ENCODE measurements at regions of chr22 and their contacts with region 1.

Region 1: DNA sequence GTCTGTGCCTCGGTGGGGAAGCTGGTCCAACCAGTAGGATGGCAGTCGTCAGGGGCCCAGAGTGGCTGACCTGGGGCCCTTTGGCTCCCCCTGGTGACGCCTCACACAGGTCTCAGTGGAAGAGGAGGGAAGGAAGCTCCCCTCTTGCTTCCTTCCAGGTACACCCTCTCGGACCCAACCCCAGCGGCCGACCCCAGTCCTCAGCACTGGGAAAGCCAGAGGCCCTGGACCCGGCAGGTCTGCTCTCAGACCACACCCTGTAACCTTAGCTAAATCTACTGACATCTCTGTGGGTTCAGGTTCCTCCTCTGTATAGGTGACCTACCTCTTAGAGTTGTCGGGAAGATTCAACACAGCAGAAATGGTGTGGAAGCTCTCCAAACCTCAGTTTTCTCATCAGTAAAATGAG is 3.4 kb upstream of the SCUBE1 start:
- DNase-seq: peak; percentile 76
- H3K4me3 Mint-ChIP-seq: no peak overlapping the region
- H3K27ac Mint-ChIP-seq: peak overlapping the region; percentile 73
- H3K4me1 Mint-ChIP-seq: peaks cover 35% of the 10 kb centered on the region
- H3K27me3 Mint-ChIP-seq: peaks cover 44% of the 10 kb centered on the region

Region 2: DNA sequence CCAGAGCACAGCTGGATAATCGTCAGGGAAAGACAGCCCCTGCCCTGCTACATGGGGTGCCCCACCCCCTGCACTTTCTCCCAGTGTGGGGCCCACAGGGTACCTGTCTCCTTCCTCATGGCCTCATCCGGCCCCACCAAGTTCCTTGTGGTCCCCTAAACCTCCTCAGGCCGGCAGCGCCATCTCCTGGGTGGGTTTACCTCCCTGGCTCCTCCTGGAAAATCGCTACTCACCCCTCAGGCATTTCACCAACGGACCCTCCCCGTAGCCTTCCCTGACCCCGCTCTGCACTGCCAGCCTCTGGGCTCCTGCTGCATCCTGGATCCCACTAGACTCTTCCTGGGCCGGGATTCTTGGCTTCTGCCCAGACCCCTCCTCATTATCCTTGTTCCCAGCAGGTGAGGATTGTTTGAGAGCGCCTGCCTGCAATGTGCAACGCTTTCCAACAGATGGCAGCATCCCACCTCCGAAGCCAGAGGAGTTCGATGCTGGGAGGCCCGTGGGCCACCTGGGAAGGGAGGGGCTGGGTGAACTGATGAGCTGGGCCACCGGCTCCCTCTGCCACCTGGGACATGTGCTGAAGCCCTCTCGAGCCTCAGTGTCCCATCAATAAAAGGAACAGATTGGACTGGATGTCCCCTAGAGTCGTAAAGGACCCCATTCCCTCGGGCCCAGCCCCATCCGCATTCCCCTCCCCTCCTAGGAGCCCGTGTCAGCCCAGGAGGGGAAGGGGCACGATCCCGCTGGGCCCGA is 115.4 kb before region 1 on chr22:
- CTCF ChIA-PET with region 1: interaction called, 99 read pairs
- POLR2A ChIA-PET with region 1: interaction called, 3 read pairs
- DNase-seq: peak; percentile 73
- H3K4me3 Mint-ChIP-seq: no peak overlapping the region
- H3K27ac Mint-ChIP-seq: no peak overlapping the region
- H3K4me1 Mint-ChIP-seq: peaks cover 4% of the 10 kb centered on the region
- H3K27me3 Mint-ChIP-seq: peaks cover 3% of the 10 kb centered on the region

Region 3: DNA sequence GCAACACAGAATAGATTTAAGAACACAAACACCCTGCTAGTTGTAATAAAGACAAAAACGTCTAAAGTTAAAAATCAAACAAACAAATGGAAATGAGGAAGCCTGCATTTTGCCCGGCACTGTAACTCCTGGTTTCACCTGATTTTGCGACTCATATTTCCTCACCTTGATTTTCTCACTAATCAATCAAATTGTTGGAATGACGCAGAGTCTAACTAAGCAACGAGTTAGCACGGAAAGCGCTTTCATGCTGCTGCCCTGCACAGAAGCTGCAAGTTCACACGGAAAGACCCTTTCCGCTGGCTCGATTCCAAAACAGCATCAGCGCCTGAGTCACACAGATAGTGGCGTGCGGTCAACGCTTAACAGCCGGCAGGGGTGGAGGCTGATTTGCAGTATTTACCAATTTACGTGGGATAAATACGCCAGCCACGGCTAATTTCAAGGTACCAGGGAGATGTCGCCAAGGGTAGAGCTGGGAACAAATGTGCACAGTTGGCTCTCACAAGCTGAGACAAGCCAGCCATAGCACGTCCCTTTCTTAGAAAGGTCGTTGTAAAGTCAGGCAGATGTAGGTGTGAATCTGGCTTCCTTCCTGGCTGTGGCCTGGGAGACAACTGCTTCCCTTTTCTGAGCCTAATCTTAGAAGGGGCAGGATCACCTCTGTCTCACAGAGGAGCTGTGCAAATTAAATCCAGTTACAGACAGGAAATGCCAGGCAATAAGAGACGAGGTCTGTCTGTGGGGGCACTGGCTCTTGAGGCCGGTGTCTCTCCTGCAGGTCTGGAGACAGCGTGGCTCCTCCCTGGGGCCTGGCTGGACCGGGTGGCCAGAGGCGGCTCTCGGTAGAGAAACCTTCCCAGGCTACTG is 82.6 kb before region 1 on chr22:
- CTCF ChIA-PET with region 1: interaction called, 30 read pairs
- POLR2A ChIA-PET with region 1: interaction called, 6 read pairs
- DNase-seq: peak; percentile 90
- H3K4me3 Mint-ChIP-seq: peak overlapping the region; percentile 63
- H3K27ac Mint-ChIP-seq: peak overlapping the region; percentile 85
- H3K4me1 Mint-ChIP-seq: peaks cover 32% of the 10 kb centered on the region
- H3K27me3 Mint-ChIP-seq: peaks cover 9% of the 10 kb centered on the region

Region 4: DNA sequence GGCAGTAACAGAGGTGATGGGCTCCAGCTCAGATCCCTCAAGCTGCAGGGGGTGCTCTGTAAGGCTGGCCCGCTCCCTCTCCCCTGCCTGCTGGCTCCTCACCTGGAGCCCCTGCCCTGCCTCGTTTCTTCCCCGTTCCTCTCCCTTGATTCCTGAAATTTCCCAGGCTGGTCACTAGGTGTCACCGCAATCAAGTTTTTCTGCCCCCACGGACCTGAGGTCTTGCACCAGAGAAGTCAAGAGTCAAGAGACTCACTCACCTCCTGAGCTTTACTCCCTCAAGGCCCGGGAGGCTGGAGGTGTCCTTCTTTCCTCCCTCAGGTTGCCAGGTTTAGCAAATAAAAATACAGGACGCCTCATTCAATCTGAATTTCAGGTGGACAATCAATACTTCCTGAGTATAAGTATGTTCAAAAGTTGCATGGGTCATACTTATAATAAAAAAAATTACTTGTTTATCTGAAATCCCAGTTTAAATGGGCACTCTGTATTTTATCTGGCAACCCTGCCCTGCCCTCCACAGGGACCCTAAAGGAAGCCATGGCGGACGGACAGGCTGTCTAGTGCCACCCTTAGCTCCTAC is 72.5 kb before region 1 on chr22:
- CTCF ChIA-PET with region 1: interaction called, 98 read pairs
- POLR2A ChIA-PET with region 1: interaction called, 6 read pairs
- DNase-seq: peak; percentile 54
- H3K4me3 Mint-ChIP-seq: no peak overlapping the region
- H3K27ac Mint-ChIP-seq: no peak overlapping the region
- H3K4me1 Mint-ChIP-seq: peaks cover 16% of the 10 kb centered on the region
- H3K27me3 Mint-ChIP-seq: peaks cover 2% of the 10 kb centered on the region

Region 5: GRCh38 chr22:43287441-43287840 is 59.1 kb before region 1 on chr22:
- CTCF ChIA-PET with region 1: interaction called, 12 read pairs
- POLR2A ChIA-PET with region 1: no interaction called
- DNase-seq: no peak
- H3K4me3 Mint-ChIP-seq: no peak overlapping the region
- H3K27ac Mint-ChIP-seq: no peak overlapping the region
- H3K4me1 Mint-ChIP-seq: peaks cover 12% of the 10 kb centered on the region
- H3K27me3 Mint-ChIP-seq: peaks cover 2% of the 10 kb centered on the region

Region 6: GRCh38 chr22:43377896-43378704 is 31.6 kb after region 1 on chr22:
- CTCF ChIA-PET with region 1: interaction called, 26 read pairs
- POLR2A ChIA-PET with region 1: interaction called, 7 read pairs
- DNase-seq: peak; percentile 44
- H3K4me3 Mint-ChIP-seq: no peak overlapping the region
- H3K27ac Mint-ChIP-seq: no peak overlapping the region
- H3K4me1 Mint-ChIP-seq: peaks cover 39% of the 10 kb centered on the region
- H3K27me3 Mint-ChIP-seq: peaks cover 68% of the 10 kb centered on the region

Region 7: GRCh38 chr22:43385770-43386641 is 39.5 kb after region 1 on chr22:
- CTCF ChIA-PET with region 1: interaction called, 13 read pairs
- POLR2A ChIA-PET with region 1: interaction called, 6 read pairs
- DNase-seq: peak; percentile 77
- H3K4me3 Mint-ChIP-seq: no peak overlapping the region
- H3K27ac Mint-ChIP-seq: no peak overlapping the region
- H3K4me1 Mint-ChIP-seq: peaks cover 10% of the 10 kb centered on the region
- H3K27me3 Mint-ChIP-seq: peaks cover 42% of the 10 kb centered on the region